ENCODE measurements at regions of chr21 and their contacts with region 1.

Region 1: DNA sequence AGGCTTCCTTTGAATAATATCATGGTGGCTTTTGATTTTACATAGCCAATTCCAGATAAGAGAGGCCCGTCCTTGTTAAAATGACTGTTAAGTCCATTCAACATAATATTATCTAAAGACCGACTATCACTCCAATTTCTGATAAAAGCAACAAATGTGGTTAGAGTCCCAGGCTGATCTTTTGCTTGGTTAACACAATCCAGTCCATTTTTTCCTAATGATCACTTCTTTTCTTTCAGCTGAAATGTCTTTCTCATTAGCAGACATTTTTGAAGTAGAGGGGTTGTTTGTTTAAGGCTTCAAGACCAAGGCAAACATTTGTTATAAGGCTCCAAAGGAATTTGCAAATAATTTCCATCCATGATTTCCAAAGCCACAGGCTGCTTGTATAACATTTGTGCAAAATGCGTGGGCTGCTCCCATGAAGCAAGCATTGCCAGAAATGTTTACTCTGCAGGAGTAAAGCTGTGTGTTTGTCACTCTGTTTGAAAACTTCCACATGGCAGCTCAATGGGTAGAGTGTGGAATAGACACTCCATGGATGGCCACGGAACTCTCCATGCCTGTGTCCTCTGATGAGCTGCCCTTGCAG is 111.5 kb downstream of the PSMG1 start:
- DNase-seq: peak; percentile 83
- ATAC-seq: peak; percentile 91
- H3K4me3 ChIP-seq: no peak overlapping the region
- H3K27ac ChIP-seq: peak overlapping the region; percentile 87; the same call in 1 of the 2 replicates
- H3K4me1 ChIP-seq: peaks cover 12% of the 10 kb centered on the region
- H3K27me3 ChIP-seq: no peaks in the 10 kb centered on the region
- CTCF ChIP-seq: no peak
- POLR2A ChIP-seq: no peak
- RAD21 ChIP-seq: no peak

Region 2: GRCh38 chr21:39612233-39613040 is 540.7 kb after region 1 on chr21 and contains the start of gene B3GALT5:
- CTCF ChIA-PET with region 1: no interaction called
- POLR2A ChIA-PET with region 1: no interaction called
- dilution Hi-C with region 1: no loop called
- in situ Hi-C with region 1: no loop called
- intact Hi-C with region 1: loop called (anchors 10 kb)
- DNase-seq: no peak
- ATAC-seq: peak; percentile 54
- H3K4me3 ChIP-seq: 0 out of 2 replicates have a peak within 1 kb of the TSS, but pooled peaks have one; percentile 32
- H3K27ac ChIP-seq: no peak within 1 kb of the TSS
- H3K4me1 ChIP-seq: no peaks in the 10 kb centered on the region
- H3K27me3 ChIP-seq: peaks cover 38% of the 10 kb centered on the region
- CTCF ChIP-seq: no peak
- POLR2A ChIP-seq: no peak
- RAD21 ChIP-seq: no peak
- total RNA-seq, gene B3GALT5: under 0.01 and 0.18 TPM in 2 replicates